Right ventricle myocardium inferior (tissue), 1 donor: ENCODE measurements at regions of chr1 and their contacts with region 1.

Region 1: GRCh38 chr1:61299463-61299862 is 217.1 kb downstream of the NFIA start:
- DNase-seq: no peak
- ATAC-seq: no peak

Region 2: DNA sequence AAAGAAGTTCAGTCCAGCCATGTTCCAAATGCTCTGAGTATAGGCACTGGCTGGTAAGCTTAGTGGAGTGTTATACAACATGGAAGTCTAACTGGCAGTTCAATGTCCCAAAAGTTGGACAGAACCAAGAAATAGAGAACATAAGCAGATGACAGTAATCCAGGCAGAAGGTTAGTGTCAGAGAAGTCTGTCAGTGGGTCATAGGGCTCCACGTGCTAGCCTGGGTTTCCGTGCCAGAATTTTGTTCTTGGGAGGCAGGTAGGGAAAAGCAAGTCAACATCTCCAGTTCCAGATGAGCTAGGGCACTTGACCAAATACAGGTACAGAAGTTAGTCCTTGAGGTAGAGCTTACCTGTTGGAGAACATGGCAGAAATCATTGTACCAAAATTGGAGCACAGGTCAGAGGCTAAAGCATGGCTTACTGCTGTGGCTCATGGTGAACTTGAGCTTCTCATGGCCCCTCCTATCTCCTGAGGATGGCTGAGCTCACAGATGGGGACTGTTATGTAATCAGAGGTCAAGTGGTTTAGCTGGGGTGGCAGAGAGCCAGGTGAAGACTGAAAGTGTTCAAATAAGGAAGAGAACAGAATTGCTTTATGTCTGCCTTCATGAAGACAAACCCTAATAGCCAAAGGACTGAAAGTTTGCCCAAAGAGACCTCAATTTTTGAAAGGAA is 46.3 kb before region 1 on chr1:
- intact Hi-C with region 1: loop called (anchors 5 kb)
- DNase-seq: peak; percentile 76
- ATAC-seq: peak; percentile 87

Region 3: DNA sequence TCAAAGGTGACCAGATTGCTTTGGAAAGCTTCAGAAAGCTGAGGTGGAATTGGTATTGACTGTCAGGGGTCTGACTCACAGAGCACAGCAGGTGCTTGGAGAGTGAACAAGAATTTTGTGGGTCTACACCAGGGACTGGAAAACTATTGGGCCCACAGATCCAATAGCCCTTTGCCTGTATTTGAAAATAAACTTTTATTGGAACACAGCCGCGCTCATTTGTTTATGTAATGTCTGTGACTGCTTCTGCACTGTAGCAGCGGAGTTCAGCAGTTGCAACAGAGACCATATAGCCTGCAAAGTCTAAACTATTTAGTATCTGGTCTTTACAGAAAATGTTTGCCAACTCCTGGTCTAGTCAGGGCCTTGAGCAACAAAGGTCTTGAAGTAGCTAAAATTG is 98.5 kb after region 1 on chr1:
- intact Hi-C with region 1: no loop called
- DNase-seq: no peak
- ATAC-seq: no peak